Cardiac septum (tissue), 1 donor: ENCODE measurements at regions of chr21 and their contacts with region 1.

Region 1: GRCh38 chr21:27564684-27565301 is 597.9 kb upstream of the ADAMTS5 start:
- DNase-seq: no peak

Region 2: GRCh38 chr21:26850108-26850643 is 714.6 kb before region 1 on chr21:
- intact Hi-C with region 1: loop called (anchors 5 kb)
- DNase-seq: no peak

Region 3: DNA sequence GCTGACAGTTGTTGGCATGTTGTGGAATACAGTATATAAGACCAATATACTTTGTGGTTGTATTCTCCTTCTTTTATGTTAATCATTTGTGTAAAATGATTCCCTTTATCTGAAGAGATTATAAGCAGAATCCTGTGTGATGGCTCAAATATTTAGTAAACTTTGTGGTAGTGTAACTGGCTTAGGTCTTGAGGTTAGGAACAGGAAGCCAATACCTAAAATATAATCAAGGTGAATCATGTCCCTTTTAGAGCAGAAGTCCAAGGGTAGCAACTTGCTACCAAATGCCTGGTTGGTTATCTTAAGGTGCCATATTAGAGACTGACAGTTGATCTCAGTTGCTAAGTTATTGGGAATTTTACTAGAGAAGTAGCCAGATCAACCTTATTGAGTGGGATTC is 199.4 kb before region 1 on chr21:
- intact Hi-C with region 1: loop called (anchors 5 kb)
- DNase-seq: no peak

Region 4: GRCh38 chr21:27648560-27648959 is 83.8 kb after region 1 on chr21:
- intact Hi-C with region 1: no loop called
- DNase-seq: no peak